ENCODE measurements at regions of chr4 and their contacts with region 1.

Region 1: GRCh38 chr4:54233277-54233696 is 4.2 kb downstream of the PDGFRA start:
- DNase-seq: peak; percentile 85
- H3K4me3 Mint-ChIP-seq: peak overlapping the region; percentile 63
- H3K27ac Mint-ChIP-seq: no peak overlapping the region
- H3K4me1 Mint-ChIP-seq: peaks cover 24% of the 10 kb centered on the region
- H3K27me3 Mint-ChIP-seq: peaks cover 59% of the 10 kb centered on the region

Region 2: GRCh38 chr4:52721968-52722815 is 1511.1 kb before region 1 on chr4:
- CTCF ChIA-PET with region 1: interaction called, 3 read pairs
- POLR2A ChIA-PET with region 1: no interaction called
- intact Hi-C with region 1: loop called (anchors 5 kb)
- DNase-seq: peak; percentile 95
- H3K4me3 Mint-ChIP-seq: peak overlapping the region; percentile 78
- H3K27ac Mint-ChIP-seq: peak overlapping the region; percentile 82
- H3K4me1 Mint-ChIP-seq: peaks cover 16% of the 10 kb centered on the region
- H3K27me3 Mint-ChIP-seq: no peaks in the 10 kb centered on the region

Region 3: DNA sequence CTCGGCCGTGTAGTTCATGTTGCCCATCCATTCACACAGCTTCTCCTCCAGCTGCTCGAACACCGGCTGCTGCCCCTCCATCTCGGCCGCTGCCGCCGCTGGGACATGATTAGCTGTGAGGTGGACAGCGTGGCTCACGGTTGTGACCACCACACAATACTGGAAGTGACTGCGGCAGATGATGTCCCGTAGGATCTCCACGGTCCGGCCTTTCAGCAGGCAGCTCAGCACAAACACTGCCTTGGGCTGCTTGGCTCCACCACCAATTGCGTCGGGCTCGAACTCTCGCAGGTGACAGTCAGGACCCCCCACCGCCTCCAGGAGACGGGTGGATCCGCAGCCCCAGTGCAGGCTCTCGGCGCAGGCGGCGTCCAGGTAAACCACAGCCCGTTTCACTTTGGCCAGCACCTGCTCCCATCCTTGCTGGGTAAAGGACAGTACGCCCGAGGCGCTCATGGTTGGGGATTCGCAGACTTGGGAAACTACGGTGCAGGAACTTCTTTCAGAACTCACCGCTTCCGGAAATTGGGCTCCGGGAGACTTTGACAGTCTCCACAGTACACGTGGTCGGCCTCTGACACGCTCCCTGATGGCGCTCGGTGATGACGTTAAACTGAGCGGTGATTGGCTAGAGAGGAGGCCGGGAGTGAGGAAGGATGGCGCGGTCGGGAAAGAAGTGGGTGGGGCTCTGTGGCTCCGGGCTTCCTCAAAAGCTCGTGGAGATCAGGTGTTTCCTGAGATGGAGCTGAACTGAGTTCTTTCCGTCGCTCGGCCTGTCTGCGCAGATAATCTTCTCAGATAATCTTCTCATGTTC is 867.6 kb before region 1 on chr4 and contains the start of gene SCFD2:
- CTCF ChIA-PET with region 1: interaction called, 3 read pairs
- POLR2A ChIA-PET with region 1: no interaction called
- intact Hi-C with region 1: loop called (anchors 5 kb)
- DNase-seq: peak; percentile 99
- H3K4me3 Mint-ChIP-seq: peak within 1 kb of the TSS; percentile 96
- H3K27ac Mint-ChIP-seq: peak within 1 kb of the TSS; percentile 94
- H3K4me1 Mint-ChIP-seq: peaks cover 39% of the 10 kb centered on the region
- H3K27me3 Mint-ChIP-seq: peaks cover 5% of the 10 kb centered on the region
- total RNA-seq, gene SCFD2: 18.8 to 19.9 TPM

Region 4: DNA sequence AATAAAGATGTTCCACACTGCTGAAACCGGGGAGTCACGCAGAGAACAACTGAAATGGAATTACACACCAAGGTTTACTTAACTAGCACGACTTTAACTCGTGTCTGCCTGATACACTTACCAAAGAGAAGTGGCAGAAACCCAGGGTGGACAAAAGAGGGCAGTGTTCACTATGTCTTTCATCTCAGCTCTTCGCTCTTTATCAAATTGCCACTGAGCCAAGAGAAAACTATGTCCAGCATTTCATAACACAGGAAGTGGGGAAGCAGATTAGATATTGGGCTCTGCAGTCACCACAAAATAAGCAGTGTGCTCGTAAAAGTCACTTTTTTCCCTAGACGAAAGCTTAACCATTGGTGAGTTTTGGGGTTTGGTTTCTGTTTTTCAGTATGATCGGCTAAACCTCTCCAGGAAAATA is 324.6 kb before region 1 on chr4:
- CTCF ChIA-PET with region 1: interaction called, 96 read pairs
- POLR2A ChIA-PET with region 1: interaction called, 3 read pairs
- intact Hi-C with region 1: loop called (anchors 1 kb)
- DNase-seq: no peak
- H3K4me3 Mint-ChIP-seq: no peak overlapping the region
- H3K27ac Mint-ChIP-seq: no peak overlapping the region
- H3K4me1 Mint-ChIP-seq: peaks cover 12% of the 10 kb centered on the region
- H3K27me3 Mint-ChIP-seq: peaks cover 47% of the 10 kb centered on the region

Region 5: DNA sequence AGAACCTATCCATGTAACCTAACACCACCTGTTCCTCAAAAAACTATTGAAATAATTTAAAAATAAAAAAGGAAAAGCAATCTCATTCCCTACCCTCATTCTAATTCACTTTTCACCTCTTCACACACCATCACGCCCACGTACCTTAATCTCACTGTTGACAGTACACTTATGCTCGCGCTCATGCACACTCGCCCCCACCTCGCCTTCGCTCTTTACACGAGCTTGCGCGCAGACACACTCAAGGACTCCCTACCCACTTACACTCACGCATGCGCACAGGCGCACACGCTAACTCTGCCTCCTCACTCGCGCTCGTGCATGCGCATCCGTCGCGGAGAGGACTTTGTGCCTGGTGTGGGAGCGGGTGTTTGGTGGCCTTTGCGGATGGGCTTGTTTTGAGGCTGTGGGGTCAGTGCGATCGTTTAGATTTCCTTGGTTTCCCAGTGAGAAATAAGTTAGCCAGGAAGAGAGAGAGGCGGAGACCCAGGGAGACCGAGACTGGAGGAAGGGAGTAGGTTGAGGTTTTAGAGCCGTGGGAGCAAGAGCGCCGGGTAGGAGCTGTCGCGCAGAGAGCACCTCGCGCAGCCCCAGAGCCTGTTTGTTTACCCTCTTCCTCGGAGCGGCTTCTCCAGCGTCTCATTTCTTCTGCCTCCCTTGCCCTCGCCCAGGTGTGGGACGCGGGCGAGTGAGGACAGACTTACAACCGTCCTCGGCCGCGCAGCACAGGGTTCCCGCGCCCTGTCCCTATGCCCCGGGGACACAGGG is 141.5 kb before region 1 on chr4:
- CTCF ChIA-PET with region 1: interaction called, 18 read pairs
- POLR2A ChIA-PET with region 1: no interaction called
- intact Hi-C with region 1: no loop called
- DNase-seq: peak; percentile 80
- H3K4me3 Mint-ChIP-seq: peak overlapping the region; percentile 76
- H3K27ac Mint-ChIP-seq: no peak overlapping the region
- H3K4me1 Mint-ChIP-seq: peaks cover 25% of the 10 kb centered on the region
- H3K27me3 Mint-ChIP-seq: peaks cover 54% of the 10 kb centered on the region

Region 6: GRCh38 chr4:54368281-54369265 is 135.3 kb after region 1 on chr4:
- CTCF ChIA-PET with region 1: no interaction called
- POLR2A ChIA-PET with region 1: no interaction called
- intact Hi-C with region 1: no loop called
- DNase-seq: no peak
- H3K4me3 Mint-ChIP-seq: no peak overlapping the region
- H3K27ac Mint-ChIP-seq: no peak overlapping the region
- H3K4me1 Mint-ChIP-seq: no peaks in the 10 kb centered on the region
- H3K27me3 Mint-ChIP-seq: peaks cover 2% of the 10 kb centered on the region